Right ventricle myocardium inferior (tissue), 1 donor: ENCODE measurements at regions of chr5 and their contacts with region 1.

Region 1: DNA sequence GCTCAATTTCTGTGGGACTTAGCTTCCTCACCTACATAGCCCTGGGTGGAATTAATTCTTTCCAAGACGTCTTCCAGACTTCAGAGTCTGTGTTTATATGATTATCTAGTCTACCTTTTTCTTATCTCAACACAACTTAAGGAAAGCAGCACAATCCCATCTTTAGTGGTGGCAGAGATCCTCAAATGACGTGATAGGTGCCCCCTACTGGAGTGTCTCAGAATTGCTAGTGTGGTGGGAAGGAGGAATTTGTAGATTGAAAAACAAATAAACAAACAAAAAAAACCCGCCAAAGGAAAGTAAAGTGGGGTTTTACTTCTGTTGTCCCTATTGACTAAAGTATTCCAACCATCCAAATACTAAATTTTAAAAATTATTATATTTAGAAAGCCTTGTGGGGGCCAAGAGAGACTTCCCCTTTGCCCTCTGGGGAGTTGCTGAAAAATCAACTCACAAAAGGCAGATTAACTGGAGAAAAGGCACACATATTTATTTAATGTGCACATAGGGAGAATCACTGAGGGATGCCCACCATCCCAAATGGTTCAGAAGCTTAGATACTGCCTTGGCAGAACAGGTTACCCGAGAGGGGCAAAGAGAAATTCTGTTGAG is 283.3 kb downstream of the TMEM167A start:
- DNase-seq: no peak
- ATAC-seq: no peak

Region 2: GRCh38 chr5:82406205-82406773 is 387.6 kb before region 1 on chr5:
- intact Hi-C with region 1: no loop called
- DNase-seq: no peak
- ATAC-seq: no peak

Region 3: DNA sequence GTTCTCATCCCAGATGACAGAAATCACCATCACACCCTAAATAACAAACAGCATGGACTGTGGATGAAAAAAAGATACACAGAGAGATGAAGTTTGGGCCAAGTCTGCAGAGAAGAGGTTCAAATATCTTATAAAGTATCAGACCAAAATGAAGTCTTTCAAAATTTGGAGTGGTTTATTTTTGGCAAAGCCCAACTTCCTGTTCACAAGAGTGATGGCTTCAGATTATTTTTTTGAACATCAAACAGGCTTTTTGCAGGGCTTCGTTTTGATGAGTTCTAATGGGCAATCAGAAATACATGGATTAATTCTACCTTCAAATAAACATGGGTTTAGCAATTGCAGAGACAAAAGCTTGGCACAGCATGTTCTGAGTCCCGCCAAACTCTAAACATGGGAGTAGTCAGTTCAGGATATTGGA is 137.6 kb before region 1 on chr5:
- intact Hi-C with region 1: loop called (anchors 10 kb)
- DNase-seq: no peak
- ATAC-seq: no peak

Region 4: DNA sequence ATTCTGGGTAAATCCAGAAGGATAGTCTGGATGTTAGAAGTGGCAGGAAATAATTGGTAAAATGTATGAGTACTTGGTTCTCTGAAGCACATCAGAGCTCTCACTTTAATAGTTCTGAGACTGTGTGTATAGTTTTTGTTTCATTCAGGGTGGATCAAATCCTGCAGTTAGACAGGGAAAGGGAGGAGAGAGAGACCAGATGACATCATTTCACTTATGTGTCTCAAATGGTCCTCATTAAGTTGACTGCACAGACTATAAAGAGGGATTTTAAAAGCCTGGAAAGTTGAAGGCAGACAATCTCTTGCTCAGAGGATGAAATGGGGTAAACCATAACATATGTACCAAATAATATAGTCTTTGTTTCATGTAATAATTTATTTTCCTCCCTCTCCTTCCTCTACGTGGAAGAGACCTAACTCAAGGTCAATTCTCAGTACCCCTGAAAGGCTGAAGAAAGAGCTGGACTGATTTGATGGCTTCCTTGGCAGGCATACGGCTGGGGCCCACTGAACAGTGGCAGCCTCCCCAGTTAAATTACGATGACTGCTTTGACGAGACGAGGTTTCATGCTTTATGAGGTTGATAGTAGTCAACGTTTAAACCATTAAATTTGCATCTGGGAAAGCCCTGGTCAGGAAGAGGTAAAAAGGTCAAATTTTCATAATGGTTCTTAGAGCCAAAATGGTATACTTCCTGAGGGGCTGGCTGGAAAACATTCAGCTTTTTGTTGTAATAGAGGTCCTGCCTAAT is 120.7 kb before region 1 on chr5:
- intact Hi-C with region 1: no loop called
- DNase-seq: no peak
- ATAC-seq: no peak

Region 5: GRCh38 chr5:82749461-82749820 is 44.5 kb before region 1 on chr5:
- intact Hi-C with region 1: no loop called
- DNase-seq: no peak
- ATAC-seq: peak; percentile 68

Region 6: GRCh38 chr5:82861701-82862100 is 67.8 kb after region 1 on chr5:
- intact Hi-C with region 1: no loop called
- DNase-seq: no peak
- ATAC-seq: no peak